ENCODE measurements at regions of chr11 and their contacts with region 1.

Region 1: GRCh38 chr11:96219981-96220623 is 122.9 kb downstream of the MAML2 start:
- DNase-seq: no peak
- H3K4me3 ChIP-seq: no peak overlapping the region
- CTCF ChIP-seq: no peak

Region 2: DNA sequence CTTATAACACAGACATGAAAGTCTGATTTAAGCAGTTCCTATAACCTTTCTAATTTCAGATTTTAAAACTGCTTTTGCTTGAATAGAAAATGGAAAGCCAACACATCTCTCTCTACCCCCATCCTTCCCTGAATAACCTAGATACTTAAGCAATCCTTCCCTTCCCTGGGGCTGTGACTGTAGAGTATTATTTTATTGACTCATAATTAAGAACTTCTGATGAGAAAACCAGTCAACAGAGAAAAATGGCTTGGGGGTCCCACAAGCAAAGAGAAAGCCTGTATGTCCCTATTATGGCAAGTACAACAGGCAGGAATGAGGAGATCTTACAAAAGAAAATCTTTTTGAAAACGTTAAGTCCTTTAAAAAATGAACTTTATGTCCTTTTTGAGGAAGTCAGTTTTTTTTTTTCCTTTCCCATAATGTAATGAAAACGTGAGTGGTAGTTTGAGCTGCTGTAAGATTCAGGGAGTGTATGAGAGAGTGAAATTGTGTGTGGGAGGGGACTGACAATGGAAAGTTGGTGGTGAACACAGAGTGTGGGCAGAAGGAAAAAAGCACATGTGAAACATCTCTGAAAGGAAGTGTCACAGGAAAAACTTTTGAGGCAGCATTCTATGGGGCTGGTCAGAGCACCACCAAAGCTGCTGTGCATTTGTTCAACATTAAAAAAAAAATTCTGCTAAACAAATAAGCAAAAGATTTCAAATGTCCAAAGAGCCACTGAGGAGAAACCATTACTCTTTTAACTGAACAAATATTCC is 31.7 kb before region 1 on chr11:
- in situ Hi-C with region 1: loop called (anchors 5 kb)
- DNase-seq: no peak
- H3K4me3 ChIP-seq: no peak overlapping the region
- CTCF ChIP-seq: no peak

Region 3: DNA sequence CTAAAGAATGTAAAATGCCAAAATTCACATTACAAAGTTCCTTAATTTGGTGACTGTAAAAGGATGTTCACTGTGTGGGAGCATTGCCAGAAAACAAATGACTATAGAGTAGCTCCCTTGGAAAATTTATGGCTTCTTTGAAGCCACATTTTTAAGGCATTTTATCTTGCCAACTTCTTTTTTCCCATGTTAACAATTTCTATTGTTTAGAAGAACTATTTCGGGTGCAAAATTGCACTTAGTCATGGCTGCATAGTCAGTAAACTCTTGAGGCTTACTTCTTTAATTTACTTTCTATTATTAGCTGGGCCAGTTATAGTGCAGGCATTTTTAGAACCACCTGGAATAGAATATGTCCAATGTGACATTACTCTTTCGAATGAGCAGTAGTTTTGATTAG is 685.0 kb after region 1 on chr11:
- in situ Hi-C with region 1: no loop called
- DNase-seq: no peak
- H3K4me3 ChIP-seq: no peak overlapping the region
- CTCF ChIP-seq: no peak

Measured in astrocyte of the cerebellum (primary cell).